ENCODE measurements at regions of chr11 and their contacts with region 1.

Region 1: GRCh38 chr11:130390071-130390758 is 38.2 kb downstream of the ADAMTS8 start:
- DNase-seq: peak in 40 of 42 donors; percentile 25 to 85 (median 68)

Region 2: GRCh38 chr11:130223291-130223971 is 166.8 kb before region 1 on chr11:
- intact Hi-C with region 1: no loop called
- DNase-seq: peak in 3 of 42 donors; percentile 5 to 40 (median 35)

Region 3: GRCh38 chr11:130427581-130428315 is 37.5 kb after region 1 on chr11:
- intact Hi-C with region 1: loop called (anchors 5 kb)
- DNase-seq: peak in 40 of 42 donors; percentile 46 to 86 (median 70)

Measured in head of caudate nucleus (tissue), 42 donors.